Endothelial cell of umbilical vein (primary cell): ENCODE measurements at regions of chr2 and their contacts with region 1.

Region 1: DNA sequence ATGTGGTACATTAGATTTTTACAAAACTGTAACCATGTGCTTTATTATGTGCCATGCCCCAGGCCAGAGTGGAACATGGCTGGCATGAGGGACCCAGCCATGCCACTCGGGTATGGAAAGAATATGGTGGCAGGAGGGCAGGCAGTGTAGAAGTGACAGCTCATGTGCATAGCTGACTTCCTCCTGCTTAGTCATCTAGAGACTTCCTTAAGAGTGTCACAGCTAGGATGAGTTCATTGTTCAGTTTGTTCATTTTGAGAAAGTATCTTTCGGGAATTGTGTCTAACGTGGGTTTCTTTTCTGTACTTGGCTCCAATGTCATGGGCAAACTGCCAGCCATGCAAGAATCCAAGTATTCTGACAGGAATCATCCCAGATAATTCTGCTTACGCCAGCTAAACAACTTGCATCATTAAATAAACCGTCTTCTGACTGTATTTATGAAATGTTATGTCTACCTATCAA is 94.3 kb upstream of the ITGB6 start:
- DNase-seq: peak; percentile 51
- H3K4me3 ChIP-seq: no peak overlapping the region
- H3K27ac ChIP-seq: peak overlapping the region; percentile 29
- H3K4me1 ChIP-seq: peaks cover 54% of the 10 kb centered on the region
- H3K27me3 ChIP-seq: no peaks in the 10 kb centered on the region
- CTCF ChIP-seq: no peak
- POLR2A ChIP-seq: no peak

Region 2: GRCh38 chr2:160278879-160279177 is 15.5 kb before region 1 on chr2:
- CTCF ChIA-PET with region 1: interaction called, 40 read pairs
- POLR2A ChIA-PET with region 1: interaction called, 4 read pairs
- dilution Hi-C with region 1: no loop called
- intact Hi-C with region 1: loop called (anchors 1 kb)
- DNase-seq: peak; percentile 58
- H3K4me3 ChIP-seq: no peak overlapping the region
- H3K27ac ChIP-seq: peak overlapping the region; percentile 80
- H3K4me1 ChIP-seq: peaks cover 44% of the 10 kb centered on the region
- H3K27me3 ChIP-seq: no peaks in the 10 kb centered on the region
- CTCF ChIP-seq: peak; percentile 29 to 50
- POLR2A ChIP-seq: peak; percentile 0

Region 3: GRCh38 chr2:160308915-160309314 is 14.5 kb after region 1 on chr2:
- CTCF ChIA-PET with region 1: interaction called, 16 read pairs
- POLR2A ChIA-PET with region 1: interaction called, 3 read pairs
- dilution Hi-C with region 1: no loop called
- intact Hi-C with region 1: loop called (anchors 1 kb)
- DNase-seq: peak; percentile 50
- H3K4me3 ChIP-seq: no peak overlapping the region
- H3K27ac ChIP-seq: peak overlapping the region; percentile 88
- H3K4me1 ChIP-seq: peaks cover 22% of the 10 kb centered on the region
- H3K27me3 ChIP-seq: no peaks in the 10 kb centered on the region
- CTCF ChIP-seq: no peak
- POLR2A ChIP-seq: no peak

Region 4: GRCh38 chr2:160365716-160366367 is 71.5 kb after region 1 on chr2:
- CTCF ChIA-PET with region 1: no interaction called
- POLR2A ChIA-PET with region 1: no interaction called
- dilution Hi-C with region 1: no loop called
- intact Hi-C with region 1: no loop called
- DNase-seq: no peak
- H3K4me3 ChIP-seq: no peak overlapping the region
- H3K27ac ChIP-seq: no peak overlapping the region
- H3K4me1 ChIP-seq: peaks cover 26% of the 10 kb centered on the region
- H3K27me3 ChIP-seq: no peaks in the 10 kb centered on the region
- CTCF ChIP-seq: no peak
- POLR2A ChIP-seq: no peak

Region 5: DNA sequence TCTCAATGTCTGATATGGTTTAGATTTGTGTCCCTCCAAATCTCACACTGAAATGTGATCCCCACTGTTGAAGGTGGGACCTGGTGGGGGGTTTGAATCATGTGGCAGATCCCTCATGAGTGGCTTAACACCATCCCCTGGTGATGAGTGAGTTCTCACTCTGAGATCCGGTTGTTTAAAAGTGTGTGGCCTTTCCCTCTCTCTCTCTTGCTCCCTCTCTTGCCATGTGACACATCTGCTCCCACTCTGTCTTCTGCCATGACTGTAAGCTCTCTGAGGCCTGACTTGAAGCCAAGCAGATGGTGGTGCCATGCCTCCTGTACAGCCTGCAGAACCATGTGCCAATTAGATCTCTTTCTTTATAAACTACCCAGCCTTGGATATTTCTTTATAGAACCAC is 90.4 kb after region 1 on chr2:
- CTCF ChIA-PET with region 1: no interaction called
- POLR2A ChIA-PET with region 1: no interaction called
- dilution Hi-C with region 1: no loop called
- intact Hi-C with region 1: no loop called
- DNase-seq: no peak
- H3K4me3 ChIP-seq: no peak overlapping the region
- H3K27ac ChIP-seq: no peak overlapping the region
- H3K4me1 ChIP-seq: peaks cover 55% of the 10 kb centered on the region
- H3K27me3 ChIP-seq: no peaks in the 10 kb centered on the region
- CTCF ChIP-seq: no peak
- POLR2A ChIP-seq: no peak

Region 6: DNA sequence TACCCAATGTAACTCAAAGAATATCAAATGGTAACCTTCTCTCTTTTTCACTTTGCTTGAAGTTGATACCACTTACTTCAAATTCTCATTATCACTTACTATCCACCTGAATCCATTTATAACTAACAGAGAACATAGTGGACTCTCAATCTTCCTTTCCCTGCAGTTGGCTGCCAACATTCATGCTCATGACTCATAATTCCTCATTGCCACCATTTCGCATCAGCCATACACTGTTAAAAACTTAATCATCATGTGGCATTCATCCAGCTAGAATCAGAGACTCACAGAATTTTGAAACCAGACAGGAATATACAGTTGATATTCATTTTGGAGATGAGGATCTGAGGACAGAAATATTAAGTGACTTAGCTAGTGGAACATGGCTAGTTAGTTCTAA is 1386.7 kb after region 1 on chr2:
- CTCF ChIA-PET with region 1: no interaction called
- POLR2A ChIA-PET with region 1: no interaction called
- dilution Hi-C with region 1: no loop called
- intact Hi-C with region 1: no loop called
- DNase-seq: peak; percentile 35
- H3K4me3 ChIP-seq: no peak overlapping the region
- H3K27ac ChIP-seq: no peak overlapping the region
- H3K4me1 ChIP-seq: no peaks in the 10 kb centered on the region
- H3K27me3 ChIP-seq: no peaks in the 10 kb centered on the region
- CTCF ChIP-seq: no peak
- POLR2A ChIP-seq: no peak